Motor neuron (in vitro differentiated cells): ENCODE measurements at regions of chr2 and their contacts with region 1.

Region 1: DNA sequence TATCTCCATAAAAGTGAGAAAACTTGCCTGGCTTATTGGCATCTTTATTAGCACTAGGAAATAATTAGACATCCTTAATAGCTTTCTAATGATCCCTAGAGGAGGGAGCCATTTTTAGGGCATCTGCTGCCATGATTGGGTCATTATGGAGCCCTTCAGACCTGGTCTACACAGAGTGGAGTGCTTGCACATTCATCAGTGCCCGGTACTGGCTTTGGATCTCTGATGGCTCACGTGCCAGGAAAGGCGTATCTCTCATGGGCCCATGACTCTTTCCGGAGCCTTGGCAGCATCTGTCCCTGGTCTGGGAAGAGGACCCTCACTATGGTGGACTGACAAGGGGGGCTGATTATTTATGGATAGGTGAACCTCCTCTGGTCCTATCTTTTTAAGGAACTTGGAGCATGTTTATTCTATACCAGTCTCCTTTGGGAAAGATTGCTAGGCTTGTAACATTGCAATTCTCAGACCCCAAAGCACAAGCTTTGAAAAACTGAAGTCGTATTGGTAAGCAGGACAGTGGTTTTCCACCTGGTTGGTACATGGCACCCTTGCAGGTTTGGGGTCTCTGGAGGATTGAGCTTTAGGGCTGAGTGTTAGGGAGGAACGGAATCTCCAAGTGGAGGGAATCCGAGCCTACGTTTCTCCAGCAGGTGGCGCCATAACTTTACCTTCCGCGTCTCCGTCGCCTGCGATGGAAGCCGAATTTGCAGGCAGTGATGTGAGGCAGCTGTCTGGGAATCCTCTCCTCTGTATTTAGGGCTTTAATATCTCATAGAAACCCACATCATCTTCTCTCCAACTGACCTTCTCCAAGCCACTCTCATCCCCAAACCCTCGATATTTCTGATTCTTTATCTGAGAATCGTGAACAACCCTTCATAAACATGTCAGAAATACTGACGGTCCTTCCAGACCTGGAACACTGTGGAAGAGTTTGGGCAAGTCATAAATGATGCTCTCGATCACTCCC is 27.8 kb downstream of the SIX2 start:
- ATAC-seq: peak; percentile 63 to 97 (median 82)
- H3K4me3 ChIP-seq: no peak overlapping the region
- H3K27ac ChIP-seq: no peak overlapping the region
- H3K4me1 ChIP-seq: no peaks in the 10 kb centered on the region

Region 2: GRCh38 chr2:44886414-44886813 is 95.0 kb before region 1 on chr2:
- in situ Hi-C with region 1: no loop called
- ATAC-seq: peak in 3 of 8 experiments; percentile 39 to 78 (median 58)
- H3K4me3 ChIP-seq: no peak overlapping the region
- H3K27ac ChIP-seq: no peak overlapping the region
- H3K4me1 ChIP-seq: no peaks in the 10 kb centered on the region

Region 3: DNA sequence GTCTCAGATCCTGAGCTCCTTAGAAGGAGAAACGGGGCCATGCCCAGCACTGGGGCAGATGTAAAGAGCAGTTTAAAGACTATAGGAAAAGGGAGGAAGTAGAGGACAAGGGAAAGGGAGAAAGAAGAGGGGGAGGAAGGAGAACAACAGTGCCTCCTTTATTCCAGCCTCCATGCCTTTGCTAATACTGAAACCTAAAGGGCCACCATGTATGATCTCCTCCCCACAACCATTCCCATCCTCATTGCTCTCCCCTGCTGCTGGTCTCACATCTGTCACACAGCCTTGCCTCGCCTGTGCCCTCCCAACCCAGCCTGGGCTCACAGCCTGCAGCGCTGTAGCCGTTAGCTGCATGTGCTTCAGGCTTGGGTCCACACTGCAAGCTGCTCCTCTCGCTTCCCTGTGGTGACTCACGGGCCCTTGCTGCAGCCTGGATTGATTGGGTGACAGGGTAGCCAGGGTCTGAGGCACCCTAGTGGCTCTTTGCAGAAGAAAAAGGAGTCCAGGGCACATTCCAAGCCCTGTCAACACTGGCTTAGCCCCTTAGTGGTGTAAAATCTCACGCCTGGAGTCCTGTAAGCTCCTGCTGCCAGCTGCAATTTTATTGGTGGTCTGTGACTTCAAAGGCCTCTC is 347.7 kb after region 1 on chr2:
- in situ Hi-C with region 1: loop called in 1 of 9 experiments (anchors 25 kb)
- ATAC-seq: peak in 5 of 8 experiments; percentile 54 to 80 (median 65)
- H3K4me3 ChIP-seq: no peak overlapping the region
- H3K27ac ChIP-seq: no peak overlapping the region
- H3K4me1 ChIP-seq: no peaks in the 10 kb centered on the region

Region 4: GRCh38 chr2:45494269-45494977 is 513.0 kb after region 1 on chr2:
- in situ Hi-C with region 1: loop called (anchors 10 to 25 kb)
- ATAC-seq: no peak
- H3K4me3 ChIP-seq: no peak overlapping the region
- H3K27ac ChIP-seq: no peak overlapping the region
- H3K4me1 ChIP-seq: no peaks in the 10 kb centered on the region

Region 5: DNA sequence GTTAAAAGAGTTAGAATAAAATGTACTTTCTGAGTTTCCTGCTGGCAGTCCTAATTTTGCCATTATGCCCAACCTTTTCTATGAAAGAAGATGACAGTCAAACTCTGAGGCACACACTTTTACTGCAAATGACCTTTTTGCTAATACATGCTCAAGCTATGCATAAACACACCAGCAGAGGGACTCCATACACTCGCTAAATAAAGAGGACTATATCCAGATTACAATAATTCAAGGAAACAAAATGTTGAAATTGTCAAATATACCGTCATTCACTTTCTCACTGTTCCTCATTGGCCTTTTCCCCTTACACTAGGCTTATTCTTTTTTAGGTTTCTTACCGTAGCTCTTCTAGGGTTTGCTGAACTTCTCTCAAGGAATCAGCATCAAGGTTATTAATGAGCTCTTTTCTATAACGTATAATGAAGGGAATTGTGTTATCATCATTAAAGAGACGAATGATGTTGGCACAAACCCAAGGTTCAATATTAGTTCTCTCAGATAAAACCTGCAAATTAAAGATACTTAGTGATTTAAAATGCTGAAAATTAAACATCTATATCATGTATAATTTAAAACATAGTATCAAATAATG is 603.9 kb after region 1 on chr2:
- in situ Hi-C with region 1: loop called in 1 of 9 experiments (anchors 25 kb)
- ATAC-seq: peak in 3 of 8 experiments; percentile 58 to 72 (median 68)
- H3K4me3 ChIP-seq: no peak overlapping the region
- H3K27ac ChIP-seq: no peak overlapping the region
- H3K4me1 ChIP-seq: no peaks in the 10 kb centered on the region